Endothelial cell of umbilical vein (primary cell): ENCODE measurements at regions of chr6 and their contacts with region 1.

Region 1: DNA sequence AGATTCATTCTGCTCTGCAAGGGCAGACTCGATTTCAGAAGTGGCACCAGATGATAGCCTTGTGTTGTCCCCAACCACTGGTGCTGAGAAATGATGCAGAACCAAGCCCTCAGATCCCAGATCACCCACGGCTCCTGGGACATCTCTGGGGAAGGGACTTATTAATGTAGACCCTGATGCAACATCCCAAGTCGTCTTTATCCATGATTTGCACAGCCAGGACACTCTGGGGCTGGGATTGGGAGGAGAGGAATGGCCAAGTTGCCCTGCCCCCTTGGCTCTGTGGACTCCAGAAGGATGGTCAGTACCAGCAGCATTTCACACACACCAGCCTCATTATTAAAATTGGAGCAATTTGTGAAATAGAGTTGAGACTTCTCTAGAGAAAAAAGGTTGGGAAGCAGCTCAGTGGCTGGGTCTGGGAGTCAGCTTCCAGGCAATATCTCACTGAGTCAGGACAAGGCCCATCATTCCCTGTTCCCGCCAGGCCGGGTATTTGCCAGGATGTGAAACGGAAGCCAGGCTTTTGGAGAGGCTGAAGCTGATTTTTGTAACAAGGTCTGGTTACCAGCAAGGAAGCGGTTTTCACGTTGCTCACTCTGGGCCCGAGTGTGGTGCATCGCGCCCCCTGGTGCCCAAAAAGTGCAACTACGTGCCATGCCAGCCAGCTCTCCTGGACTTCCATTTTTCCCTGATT is 67.4 kb downstream of the ZBTB2 start:
- DNase-seq: peak; percentile 94
- H3K4me3 ChIP-seq: no peak overlapping the region
- H3K27ac ChIP-seq: peak overlapping the region; percentile 80
- H3K4me1 ChIP-seq: peaks cover 26% of the 10 kb centered on the region
- H3K27me3 ChIP-seq: no peaks in the 10 kb centered on the region
- CTCF ChIP-seq: peak; percentile 94 to 97
- POLR2A ChIP-seq: peak; percentile 28

Region 2: GRCh38 chr6:150959166-150959565 is 364.8 kb before region 1 on chr6:
- CTCF ChIA-PET with region 1: interaction called, 20 read pairs
- POLR2A ChIA-PET with region 1: no interaction called
- dilution Hi-C with region 1: no loop called
- intact Hi-C with region 1: no loop called
- DNase-seq: peak; percentile 67
- H3K4me3 ChIP-seq: no peak overlapping the region
- H3K27ac ChIP-seq: peak overlapping the region; percentile 80
- H3K4me1 ChIP-seq: peaks cover 13% of the 10 kb centered on the region
- H3K27me3 ChIP-seq: no peaks in the 10 kb centered on the region
- CTCF ChIP-seq: no peak
- POLR2A ChIP-seq: no peak

Region 3: DNA sequence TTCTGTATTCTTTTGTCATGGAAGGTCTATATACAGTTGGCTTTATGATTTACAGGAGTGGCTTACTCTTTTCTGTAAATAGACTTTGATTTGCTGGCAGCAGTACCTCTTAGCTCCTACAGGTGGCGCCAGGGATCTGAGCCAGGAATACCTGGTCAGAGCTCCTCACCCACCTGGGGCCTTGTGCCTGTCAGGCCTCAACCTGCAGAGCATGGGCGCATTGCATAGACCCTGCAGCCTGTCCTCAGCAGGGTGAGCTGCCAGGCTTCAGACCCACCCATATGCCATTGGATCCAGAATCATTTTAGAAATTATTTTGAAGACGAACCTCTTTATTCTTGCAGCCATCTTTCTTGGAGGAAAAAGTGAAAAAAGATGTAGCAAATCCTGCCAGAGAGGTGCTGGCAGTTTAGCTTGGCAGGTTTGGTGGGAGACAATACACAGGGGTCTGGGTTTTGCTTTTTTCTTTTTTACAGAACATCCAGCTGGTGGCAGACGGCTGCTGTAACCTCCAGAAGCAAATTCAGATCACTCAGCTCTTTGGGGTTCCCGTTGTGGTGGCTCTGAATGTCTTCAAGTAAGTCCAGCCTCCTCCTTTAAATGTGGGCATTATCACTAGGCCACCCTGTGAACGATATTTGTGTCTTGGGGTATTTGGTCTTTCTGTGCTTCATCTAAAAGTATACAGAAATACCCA is 309.4 kb before region 1 on chr6:
- CTCF ChIA-PET with region 1: interaction called, 284 read pairs
- POLR2A ChIA-PET with region 1: interaction called, 11 read pairs
- dilution Hi-C with region 1: no loop called
- intact Hi-C with region 1: loop called (anchors 1 kb)
- DNase-seq: peak; percentile 80
- H3K4me3 ChIP-seq: no peak overlapping the region
- H3K27ac ChIP-seq: peak overlapping the region; percentile 90
- H3K4me1 ChIP-seq: peaks cover 35% of the 10 kb centered on the region
- H3K27me3 ChIP-seq: no peaks in the 10 kb centered on the region
- CTCF ChIP-seq: peak; percentile 91 to 94
- POLR2A ChIP-seq: no peak

Region 4: GRCh38 chr6:151044465-151045441 is 279.2 kb before region 1 on chr6:
- CTCF ChIA-PET with region 1: interaction called, 10 read pairs
- POLR2A ChIA-PET with region 1: interaction called, 10 read pairs
- dilution Hi-C with region 1: no loop called
- intact Hi-C with region 1: loop called (anchors 1 kb)
- DNase-seq: peak; percentile 97
- H3K4me3 ChIP-seq: no peak overlapping the region
- H3K27ac ChIP-seq: peak overlapping the region; percentile 100
- H3K4me1 ChIP-seq: peaks cover 49% of the 10 kb centered on the region
- H3K27me3 ChIP-seq: no peaks in the 10 kb centered on the region
- CTCF ChIP-seq: no peak
- POLR2A ChIP-seq: peak; percentile 44

Region 5: GRCh38 chr6:151082079-151082478 is 241.9 kb before region 1 on chr6:
- CTCF ChIA-PET with region 1: interaction called, 10 read pairs
- POLR2A ChIA-PET with region 1: no interaction called
- dilution Hi-C with region 1: no loop called
- intact Hi-C with region 1: no loop called
- DNase-seq: no peak
- H3K4me3 ChIP-seq: no peak overlapping the region
- H3K27ac ChIP-seq: no peak overlapping the region
- H3K4me1 ChIP-seq: peaks cover 10% of the 10 kb centered on the region
- H3K27me3 ChIP-seq: no peaks in the 10 kb centered on the region
- CTCF ChIP-seq: no peak
- POLR2A ChIP-seq: no peak

Region 6: DNA sequence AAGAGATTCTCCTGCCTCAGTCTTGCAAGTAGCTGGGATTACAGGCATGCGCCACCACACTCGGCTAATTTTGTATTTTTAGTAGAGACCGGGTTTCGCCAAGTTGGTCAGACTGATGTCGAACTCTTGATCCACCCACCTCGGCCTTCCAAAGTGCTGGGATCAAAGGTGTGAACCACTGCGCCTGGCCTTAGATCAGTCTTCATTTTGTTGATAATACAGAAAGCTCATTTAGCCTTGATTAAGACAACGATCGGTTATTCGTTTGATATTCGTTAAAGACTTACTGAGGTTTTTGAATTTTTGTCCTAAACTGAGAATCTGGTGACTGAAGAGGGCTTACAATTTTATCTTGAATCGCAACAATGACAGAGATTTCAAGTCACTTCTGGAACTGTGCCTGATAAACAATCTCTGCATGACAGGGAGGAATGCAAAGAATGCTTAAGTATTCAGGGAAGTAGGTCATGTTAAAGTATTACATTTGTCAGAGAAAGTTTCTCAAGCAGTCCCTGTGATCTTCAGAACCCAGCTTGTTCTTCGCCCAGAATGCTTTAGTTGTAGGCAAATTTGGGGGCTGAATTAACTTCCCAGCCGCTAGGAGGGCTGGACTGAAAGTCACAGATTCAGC is 69.4 kb before region 1 on chr6:
- CTCF ChIA-PET with region 1: interaction called, 5 read pairs
- POLR2A ChIA-PET with region 1: no interaction called
- dilution Hi-C with region 1: no loop called
- intact Hi-C with region 1: loop called (anchors 5 kb)
- DNase-seq: peak; percentile 46
- H3K4me3 ChIP-seq: no peak overlapping the region
- H3K27ac ChIP-seq: peak overlapping the region; percentile 12
- H3K4me1 ChIP-seq: peaks cover 9% of the 10 kb centered on the region
- H3K27me3 ChIP-seq: no peaks in the 10 kb centered on the region
- CTCF ChIP-seq: no peak
- POLR2A ChIP-seq: no peak

Region 7: GRCh38 chr6:152316024-152316423 is 992.1 kb after region 1 on chr6:
- CTCF ChIA-PET with region 1: no interaction called
- POLR2A ChIA-PET with region 1: no interaction called
- dilution Hi-C with region 1: no loop called
- intact Hi-C with region 1: no loop called
- DNase-seq: peak; percentile 93
- H3K4me3 ChIP-seq: no peak overlapping the region
- H3K27ac ChIP-seq: peak overlapping the region; percentile 87
- H3K4me1 ChIP-seq: peaks cover 32% of the 10 kb centered on the region
- H3K27me3 ChIP-seq: no peaks in the 10 kb centered on the region
- CTCF ChIP-seq: no peak
- POLR2A ChIP-seq: peak; percentile 47